Heart right ventricle (tissue), 16 donors: ENCODE measurements at regions of chr5 and their contacts with region 1.

Region 1: GRCh38 chr5:1134478-1134877 is 22.6 kb upstream of the SLC12A7 start:
- DNase-seq: peak in 1 of 2 donors; percentile 4
- ATAC-seq: no peak
- H3K4me3 ChIP-seq: no peak overlapping the region
- H3K27ac ChIP-seq: peak overlapping the region in 3 of 10 donors; percentile 60 to 70 (median 62)
- H3K4me1 ChIP-seq: peaks cover 9 to 64% (median 30%) of the 10 kb centered on the region in 9 donors
- H3K27me3 ChIP-seq: no peaks in the 10 kb centered on the region
- CTCF ChIP-seq: peak in 4 of 9 donors; percentile 20 to 32 (median 27)

Region 2: DNA sequence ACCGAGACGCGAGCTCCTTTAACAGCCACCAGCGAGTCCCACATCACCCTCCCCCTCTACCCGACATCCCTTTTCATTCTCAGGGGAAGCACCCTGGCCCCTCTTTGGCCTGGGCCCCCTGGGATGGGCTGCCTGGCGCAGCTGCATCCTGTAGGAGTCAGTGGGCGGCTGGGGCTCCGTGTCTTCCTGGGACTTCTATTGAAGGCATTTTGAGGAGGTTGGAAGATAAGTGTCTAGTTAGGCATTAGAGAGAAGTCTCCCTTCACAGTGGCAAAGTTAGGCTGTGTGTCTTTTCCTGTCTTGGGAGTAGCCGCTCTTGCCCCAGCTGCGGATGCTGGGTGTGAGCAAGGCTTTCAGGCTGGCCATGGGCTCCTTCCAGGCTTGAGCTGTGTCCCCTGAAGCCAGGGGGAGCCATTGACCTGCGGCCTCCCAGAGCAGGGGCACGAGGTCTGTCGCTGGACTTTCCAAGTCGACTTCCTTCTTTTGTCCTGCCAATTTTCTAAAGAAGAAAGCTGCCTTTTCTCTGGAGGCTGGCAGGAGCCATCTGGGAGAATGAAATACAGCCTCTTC is 144.4 kb before region 1 on chr5:
- intact Hi-C with region 1: loop called in 2 of 10 experiments (anchors 5 kb)
- DNase-seq: peak; percentile 73 to 81
- ATAC-seq: peak; percentile 63 to 88 (median 76)
- H3K4me3 ChIP-seq: no peak overlapping the region
- H3K27ac ChIP-seq: peak overlapping the region in 9 of 10 donors; percentile 22 to 81 (median 65)
- H3K4me1 ChIP-seq: peaks cover 6 to 56% (median 26%) of the 10 kb centered on the region in 9 donors
- H3K27me3 ChIP-seq: peaks cover 0 to 8% (median 0%) of the 10 kb centered on the region in 7 donors
- CTCF ChIP-seq: peak; percentile 33 to 84 (median 70)

Region 3: GRCh38 chr5:1052641-1053390 is 81.7 kb before region 1 on chr5:
- intact Hi-C with region 1: loop called in 2 of 10 experiments (anchors 10 kb)
- DNase-seq: peak in 1 of 2 donors; percentile 57
- ATAC-seq: peak; percentile 31 to 78 (median 58)
- H3K4me3 ChIP-seq: no peak overlapping the region
- H3K27ac ChIP-seq: peak overlapping the region in 8 of 10 donors; percentile 15 to 79 (median 58)
- H3K4me1 ChIP-seq: peaks cover 0 to 38% (median 11%) of the 10 kb centered on the region in 9 donors
- H3K27me3 ChIP-seq: no peaks in the 10 kb centered on the region
- CTCF ChIP-seq: peak in 6 of 9 donors; percentile 5 to 35 (median 26)